HepG2 (cell line): ENCODE measurements at regions of chr20 and their contacts with region 1.

Region 1: DNA sequence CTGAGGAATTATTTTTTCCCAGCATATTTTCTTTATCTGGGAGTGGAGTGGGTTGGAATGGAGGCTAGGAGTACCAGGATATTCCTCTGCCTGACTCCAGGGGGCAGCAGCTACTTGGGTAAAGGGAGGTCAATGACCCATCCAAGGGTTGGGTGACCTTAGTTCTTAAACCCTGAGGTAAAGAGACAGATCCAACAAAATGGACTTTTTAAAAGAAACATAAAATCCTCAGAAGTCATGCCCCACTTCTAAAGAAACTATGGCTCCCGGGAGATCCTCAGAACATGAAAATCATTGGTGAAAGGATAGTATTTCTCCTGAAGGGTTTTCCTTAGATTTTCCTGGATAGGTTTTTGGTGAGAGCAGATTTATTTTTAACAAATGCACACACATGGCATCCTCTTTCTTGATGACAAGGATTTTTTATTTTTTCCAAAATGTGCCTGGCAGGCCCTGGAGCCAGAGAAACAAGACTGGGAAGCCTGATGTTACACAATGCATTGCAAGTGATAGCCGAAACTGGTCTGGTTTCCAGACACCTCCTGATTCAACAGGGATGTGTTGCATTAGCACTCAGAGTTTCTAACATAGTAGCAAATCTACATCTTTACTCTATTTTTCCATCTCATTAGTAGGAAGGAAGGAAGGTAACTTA is 240.9 kb upstream of the BTBD3 start:
- DNase-seq: peak; percentile 62
- ATAC-seq: peak; percentile 99
- H3K4me3 ChIP-seq: no peak overlapping the region
- H3K27ac ChIP-seq: no peak overlapping the region
- H3K4me1 ChIP-seq: no peaks in the 10 kb centered on the region
- H3K27me3 ChIP-seq: no peaks in the 10 kb centered on the region
- CTCF ChIP-seq: peak; percentile 89
- EP300 ChIP-seq: no peak
- POLR2A ChIP-seq: no peak
- RAD21 ChIP-seq: peak; percentile 87

Region 2: DNA sequence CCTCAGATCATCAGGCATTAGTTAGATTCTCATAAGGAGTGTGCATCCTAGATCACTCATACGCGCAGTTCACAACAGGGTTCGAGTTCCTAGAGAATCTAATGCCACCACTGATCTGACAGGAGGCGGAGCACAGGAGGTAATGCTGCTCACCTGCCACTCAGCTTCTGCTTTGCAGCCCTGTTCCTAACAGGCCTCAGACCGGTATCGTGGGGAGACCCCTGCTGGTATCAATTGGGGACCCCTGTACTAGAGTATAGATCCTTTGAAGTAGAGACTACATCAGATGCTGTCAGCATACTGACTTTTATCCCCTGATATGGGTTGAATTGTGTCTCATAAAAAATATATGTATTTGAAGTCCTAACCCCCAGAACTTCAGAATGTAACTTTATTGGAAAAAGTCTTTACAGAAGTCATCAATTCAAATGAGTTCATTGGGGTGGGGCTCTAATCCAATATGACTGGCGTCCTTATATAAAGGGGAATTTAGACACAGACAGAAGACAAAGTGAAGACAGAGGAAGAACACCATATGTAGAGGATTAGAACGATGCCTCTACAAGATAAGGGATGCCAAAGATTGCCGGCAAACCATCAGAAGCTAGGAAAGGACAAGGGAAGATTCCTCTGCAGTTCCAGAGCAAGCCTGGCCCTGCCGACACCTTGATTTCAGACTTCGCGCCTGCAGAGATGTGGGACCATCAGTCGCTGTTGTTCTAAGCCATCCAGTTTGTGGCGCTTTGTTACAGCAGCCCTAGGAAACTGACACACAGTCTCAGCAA is 136.5 kb after region 1 on chr20:
- CTCF ChIA-PET with region 1: no interaction called
- POLR2A ChIA-PET with region 1: no interaction called
- in situ Hi-C with region 1: no loop called
- intact Hi-C with region 1: loop called (anchors 1 kb)
- DNase-seq: no peak
- ATAC-seq: peak; percentile 66
- H3K4me3 ChIP-seq: no peak overlapping the region
- H3K27ac ChIP-seq: no peak overlapping the region
- H3K4me1 ChIP-seq: no peaks in the 10 kb centered on the region
- H3K27me3 ChIP-seq: no peaks in the 10 kb centered on the region
- CTCF ChIP-seq: peak; percentile 29; the same call in 1 of the 2 replicates
- EP300 ChIP-seq: no peak
- POLR2A ChIP-seq: no peak
- RAD21 ChIP-seq: no peak

Region 3: GRCh38 chr20:11890331-11891080 is 213.7 kb after region 1 on chr20:
- CTCF ChIA-PET with region 1: no interaction called
- POLR2A ChIA-PET with region 1: no interaction called
- in situ Hi-C with region 1: no loop called
- intact Hi-C with region 1: loop called (anchors 5 kb)
- DNase-seq: peak; percentile 92
- ATAC-seq: peak; percentile 85
- H3K4me3 ChIP-seq: peak overlapping the region; percentile 89 to 93 (median 91)
- H3K27ac ChIP-seq: peak overlapping the region; percentile 81
- H3K4me1 ChIP-seq: peaks cover 40% of the 10 kb centered on the region
- H3K27me3 ChIP-seq: no peaks in the 10 kb centered on the region; a peak in 1 of 5 replicates
- CTCF ChIP-seq: no peak
- EP300 ChIP-seq: peak in 1 of 2 experiments; percentile 23; a peak in 1 of 4 replicates
- POLR2A ChIP-seq: peak in 1 of 2 experiments; percentile 64; a peak in 1 of 4 replicates
- RAD21 ChIP-seq: peak; percentile 62

Region 4: GRCh38 chr20:11965602-11966001 is 288.8 kb after region 1 on chr20:
- CTCF ChIA-PET with region 1: no interaction called
- POLR2A ChIA-PET with region 1: no interaction called
- in situ Hi-C with region 1: no loop called
- intact Hi-C with region 1: loop called (anchors 5 kb)
- DNase-seq: no peak
- ATAC-seq: peak; percentile 71
- H3K4me3 ChIP-seq: no peak overlapping the region
- H3K27ac ChIP-seq: no peak overlapping the region
- H3K4me1 ChIP-seq: no peaks in the 10 kb centered on the region
- H3K27me3 ChIP-seq: no peaks in the 10 kb centered on the region
- CTCF ChIP-seq: peak; percentile 23; the same call in 1 of the 2 replicates
- EP300 ChIP-seq: no peak
- POLR2A ChIP-seq: no peak
- RAD21 ChIP-seq: no peak

Region 5: GRCh38 chr20:12207875-12208274 is 531.1 kb after region 1 on chr20:
- CTCF ChIA-PET with region 1: interaction called, 25 read pairs
- POLR2A ChIA-PET with region 1: no interaction called
- in situ Hi-C with region 1: loop called (anchors 5 kb)
- intact Hi-C with region 1: loop called (anchors 1 kb)
- DNase-seq: peak; percentile 44
- ATAC-seq: peak; percentile 95
- H3K4me3 ChIP-seq: no peak overlapping the region
- H3K27ac ChIP-seq: no peak overlapping the region
- H3K4me1 ChIP-seq: no peaks in the 10 kb centered on the region
- H3K27me3 ChIP-seq: no peaks in the 10 kb centered on the region
- CTCF ChIP-seq: peak; percentile 63
- EP300 ChIP-seq: no peak
- POLR2A ChIP-seq: no peak
- RAD21 ChIP-seq: peak; percentile 49

Region 6: GRCh38 chr20:12358006-12358656 is 681.4 kb after region 1 on chr20:
- CTCF ChIA-PET with region 1: no interaction called
- POLR2A ChIA-PET with region 1: no interaction called
- in situ Hi-C with region 1: no loop called
- intact Hi-C with region 1: loop called (anchors 1 kb)
- DNase-seq: no peak
- ATAC-seq: peak; percentile 90
- H3K4me3 ChIP-seq: no peak overlapping the region
- H3K27ac ChIP-seq: no peak overlapping the region
- H3K4me1 ChIP-seq: no peaks in the 10 kb centered on the region
- H3K27me3 ChIP-seq: no peaks in the 10 kb centered on the region
- CTCF ChIP-seq: peak; percentile 47
- EP300 ChIP-seq: no peak
- POLR2A ChIP-seq: no peak
- RAD21 ChIP-seq: no peak

Region 7: DNA sequence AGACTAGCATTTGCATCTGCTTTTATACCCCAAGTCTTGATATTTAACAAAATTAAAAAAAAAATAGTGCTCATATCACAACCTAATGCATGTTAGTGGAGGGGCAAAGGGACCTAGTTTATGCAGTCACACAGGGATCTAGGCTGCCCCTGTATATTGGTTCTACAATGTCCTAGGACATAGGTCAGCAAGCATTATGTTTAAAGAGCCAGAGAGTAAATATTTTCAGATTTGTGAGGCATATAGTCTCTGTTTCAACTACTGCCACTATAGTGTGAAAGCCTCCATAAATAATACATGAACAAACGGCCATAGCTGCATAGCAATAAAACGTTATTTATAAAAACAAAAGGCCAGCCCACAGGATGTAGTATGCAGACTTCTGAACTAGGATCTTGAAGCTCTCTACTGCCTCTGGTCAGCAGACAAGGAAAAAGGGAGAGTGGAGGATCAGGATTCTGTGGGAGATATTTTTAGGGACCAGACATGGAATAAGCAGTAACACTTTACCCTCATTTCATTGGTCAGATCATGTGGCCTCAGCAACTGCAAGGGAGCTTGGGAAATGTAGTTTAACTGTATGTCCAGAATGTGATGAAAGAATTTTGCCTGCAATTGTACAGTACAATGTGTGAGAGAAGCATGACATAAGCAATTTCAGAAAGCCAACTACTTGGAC is 917.8 kb after region 1 on chr20:
- CTCF ChIA-PET with region 1: no interaction called
- POLR2A ChIA-PET with region 1: no interaction called
- in situ Hi-C with region 1: no loop called
- intact Hi-C with region 1: loop called (anchors 10 kb)
- DNase-seq: peak; percentile 13
- ATAC-seq: peak; percentile 76
- H3K4me3 ChIP-seq: no peak overlapping the region
- H3K27ac ChIP-seq: no peak overlapping the region
- H3K4me1 ChIP-seq: no peaks in the 10 kb centered on the region
- H3K27me3 ChIP-seq: no peaks in the 10 kb centered on the region; a peak in 1 of 5 replicates
- CTCF ChIP-seq: no peak
- EP300 ChIP-seq: no peak
- POLR2A ChIP-seq: no peak
- RAD21 ChIP-seq: no peak